Panc1 (cell line): ENCODE measurements at regions of chr10 and their contacts with region 1.

Region 1: DNA sequence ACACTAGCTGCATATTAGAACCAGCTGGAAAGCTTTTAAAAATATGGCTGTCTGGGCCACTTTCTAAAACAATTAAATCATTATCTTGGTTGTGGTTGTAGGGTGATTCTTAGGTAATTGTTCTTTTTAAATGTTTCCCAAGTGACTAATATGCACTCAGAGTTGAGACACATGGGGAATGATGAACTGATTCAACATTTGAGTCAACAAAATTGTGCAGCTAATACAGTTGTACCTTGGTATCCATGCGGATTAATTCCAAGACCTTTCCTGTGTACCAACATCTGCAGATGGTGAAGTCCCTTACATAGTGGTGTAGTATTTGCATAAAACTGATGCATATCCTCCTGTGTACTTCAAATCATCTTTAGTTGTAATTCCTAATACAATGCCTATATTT is 242.2 kb downstream of the ATRNL1 start:
- DNase-seq: no peak
- ATAC-seq: no peak
- H3K4me3 ChIP-seq: no peak overlapping the region
- H3K27ac ChIP-seq: no peak overlapping the region
- H3K4me1 ChIP-seq: no peaks in the 10 kb centered on the region
- H3K27me3 ChIP-seq: no peaks in the 10 kb centered on the region
- CTCF ChIP-seq: no peak

Region 2: GRCh38 chr10:114810926-114811325 is 524.4 kb before region 1 on chr10:
- CTCF ChIA-PET with region 1: no interaction called
- POLR2A ChIA-PET with region 1: no interaction called
- in situ Hi-C with region 1: no loop called
- intact Hi-C with region 1: no loop called
- DNase-seq: no peak
- ATAC-seq: no peak
- H3K4me3 ChIP-seq: no peak overlapping the region
- H3K27ac ChIP-seq: no peak overlapping the region
- H3K4me1 ChIP-seq: no peaks in the 10 kb centered on the region
- H3K27me3 ChIP-seq: no peaks in the 10 kb centered on the region
- CTCF ChIP-seq: no peak

Region 3: DNA sequence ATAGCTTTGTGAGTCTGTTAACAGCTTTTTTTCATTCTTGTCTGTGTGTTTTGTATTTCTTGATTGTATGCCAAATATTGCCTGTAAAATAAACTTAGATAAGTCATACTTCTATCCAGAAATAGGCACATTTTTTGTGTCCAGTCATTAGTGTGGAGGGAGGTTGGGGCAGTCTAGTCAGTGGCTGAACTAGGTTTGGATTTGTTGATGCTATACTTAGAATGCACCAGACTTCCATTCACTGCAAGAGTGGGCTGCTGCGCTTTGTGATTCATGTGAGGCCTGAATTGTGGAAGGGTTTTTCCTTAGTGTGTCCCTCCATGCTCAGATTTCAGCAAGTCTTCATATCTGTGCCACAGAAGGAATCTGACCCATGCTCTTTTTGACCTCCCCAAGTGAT is 347.4 kb before region 1 on chr10:
- CTCF ChIA-PET with region 1: no interaction called
- POLR2A ChIA-PET with region 1: no interaction called
- in situ Hi-C with region 1: no loop called
- intact Hi-C with region 1: no loop called
- DNase-seq: no peak
- ATAC-seq: 0 out of 2 replicates have a peak, but pooled peaks have one; percentile 26
- H3K4me3 ChIP-seq: no peak overlapping the region
- H3K27ac ChIP-seq: no peak overlapping the region
- H3K4me1 ChIP-seq: no peaks in the 10 kb centered on the region
- H3K27me3 ChIP-seq: no peaks in the 10 kb centered on the region
- CTCF ChIP-seq: no peak

Region 4: DNA sequence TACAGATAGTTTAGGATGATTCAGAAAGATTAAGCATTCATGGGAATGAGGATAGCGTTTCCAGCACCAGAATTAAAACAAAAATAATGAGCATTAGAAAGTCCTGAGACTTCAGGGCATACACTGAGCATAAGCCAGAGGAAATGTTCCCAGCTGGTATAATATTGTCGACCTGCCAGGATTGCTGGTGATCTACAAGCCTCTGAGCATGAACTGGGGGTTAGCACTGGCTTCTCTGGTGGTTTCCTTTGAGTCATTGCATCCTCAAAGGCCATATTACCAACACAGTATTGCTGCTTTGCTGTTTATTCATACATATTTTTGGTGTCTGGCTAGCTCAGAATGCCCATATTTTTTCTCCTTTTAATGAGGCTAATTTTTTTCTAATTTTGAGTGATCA is 252.9 kb before region 1 on chr10:
- CTCF ChIA-PET with region 1: no interaction called
- POLR2A ChIA-PET with region 1: no interaction called
- in situ Hi-C with region 1: no loop called
- intact Hi-C with region 1: no loop called
- DNase-seq: no peak
- ATAC-seq: no peak
- H3K4me3 ChIP-seq: no peak overlapping the region
- H3K27ac ChIP-seq: no peak overlapping the region
- H3K4me1 ChIP-seq: no peaks in the 10 kb centered on the region
- H3K27me3 ChIP-seq: peaks cover 2% of the 10 kb centered on the region; the same call in 1 of the 2 replicates
- CTCF ChIP-seq: no peak

Region 5: DNA sequence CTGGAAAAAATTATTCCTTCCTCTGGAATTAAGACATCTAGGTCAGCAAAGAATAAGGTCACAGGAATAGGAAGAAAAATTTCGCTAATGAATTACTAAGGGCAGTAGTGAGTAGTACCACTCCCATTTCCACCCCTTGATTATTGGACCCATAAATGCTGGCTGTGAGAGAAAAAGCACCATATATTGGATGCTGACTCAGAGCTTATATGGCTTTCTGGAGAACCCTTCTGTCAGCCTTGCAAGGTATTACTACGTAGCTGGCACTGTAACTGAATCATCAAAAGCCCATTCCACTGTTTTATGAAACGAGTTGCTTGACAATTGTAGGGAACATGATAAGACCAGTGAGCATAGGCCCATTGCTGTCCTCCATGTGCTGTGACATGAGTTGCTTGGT is 62.9 kb before region 1 on chr10:
- CTCF ChIA-PET with region 1: no interaction called
- POLR2A ChIA-PET with region 1: no interaction called
- in situ Hi-C with region 1: no loop called
- intact Hi-C with region 1: no loop called
- DNase-seq: no peak
- ATAC-seq: no peak
- H3K4me3 ChIP-seq: no peak overlapping the region
- H3K27ac ChIP-seq: no peak overlapping the region
- H3K4me1 ChIP-seq: no peaks in the 10 kb centered on the region
- H3K27me3 ChIP-seq: no peaks in the 10 kb centered on the region
- CTCF ChIP-seq: no peak

Region 6: GRCh38 chr10:115774721-115775120 is 439.4 kb after region 1 on chr10:
- CTCF ChIA-PET with region 1: interaction called, 12 read pairs
- POLR2A ChIA-PET with region 1: no interaction called
- in situ Hi-C with region 1: no loop called
- intact Hi-C with region 1: no loop called
- DNase-seq: no peak
- ATAC-seq: no peak
- H3K4me3 ChIP-seq: no peak overlapping the region
- H3K27ac ChIP-seq: no peak overlapping the region
- H3K4me1 ChIP-seq: no peaks in the 10 kb centered on the region
- H3K27me3 ChIP-seq: no peaks in the 10 kb centered on the region
- CTCF ChIP-seq: no peak

Region 7: GRCh38 chr10:116721547-116722392 is 1386.4 kb after region 1 on chr10:
- CTCF ChIA-PET with region 1: no interaction called
- POLR2A ChIA-PET with region 1: interaction called, 12 read pairs
- in situ Hi-C with region 1: no loop called
- intact Hi-C with region 1: no loop called
- DNase-seq: no peak
- ATAC-seq: no peak
- H3K4me3 ChIP-seq: no peak overlapping the region
- H3K27ac ChIP-seq: no peak overlapping the region
- H3K4me1 ChIP-seq: no peaks in the 10 kb centered on the region; the same call in 1 of the 2 replicates
- H3K27me3 ChIP-seq: no peaks in the 10 kb centered on the region; the same call in 1 of the 2 replicates
- CTCF ChIP-seq: no peak